Natural killer cell (primary cell): ENCODE measurements at regions of chr18 and their contacts with region 1.

Region 1: GRCh38 chr18:63518178-63519012 is 23.8 kb upstream of the SERPINB12 start:
- DNase-seq: peak; percentile 26 to 83
- ATAC-seq: peak; percentile 65 to 82 (median 78)
- H3K4me3 ChIP-seq: no peak overlapping the region
- H3K4me3 Mint-ChIP-seq: no peak overlapping the region
- H3K27ac ChIP-seq: no peak overlapping the region
- H3K27ac Mint-ChIP-seq: no peak overlapping the region
- H3K4me1 ChIP-seq: no peaks in the 10 kb centered on the region
- H3K4me1 Mint-ChIP-seq: peaks cover 0 to 6% of the 10 kb centered on the region in 2 donors
- H3K27me3 ChIP-seq: peaks cover 3% of the 10 kb centered on the region
- H3K27me3 Mint-ChIP-seq: peaks cover 22 to 29% of the 10 kb centered on the region in 2 donors
- CTCF ChIP-seq: peak; percentile 80

Region 2: DNA sequence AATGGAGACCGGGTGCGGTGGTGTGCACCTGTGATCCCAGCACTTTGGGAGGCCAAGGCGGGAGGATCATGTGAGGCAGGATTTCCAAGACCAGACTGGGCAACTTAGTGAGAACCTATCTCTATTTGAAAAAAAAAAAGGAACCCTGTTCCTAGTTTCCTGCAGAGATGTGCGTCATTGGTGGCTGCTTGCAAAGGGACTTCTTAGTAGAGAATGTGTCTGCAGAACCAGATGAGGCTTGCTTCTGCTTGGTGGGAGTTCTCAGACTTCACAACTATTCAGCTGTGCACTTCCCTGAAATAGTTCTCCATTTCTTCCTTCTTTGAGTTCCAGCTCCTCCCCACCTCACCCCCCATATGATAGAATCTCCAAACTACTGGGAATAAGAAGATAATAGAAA is 973.3 kb before region 1 on chr18:
- intact Hi-C with region 1: no loop called
- DNase-seq: no peak
- ATAC-seq: no peak
- H3K4me3 ChIP-seq: no peak overlapping the region
- H3K4me3 Mint-ChIP-seq: no peak overlapping the region
- H3K27ac ChIP-seq: no peak overlapping the region
- H3K27ac Mint-ChIP-seq: no peak overlapping the region
- H3K4me1 ChIP-seq: no peaks in the 10 kb centered on the region
- H3K4me1 Mint-ChIP-seq: peaks cover 10 to 23% of the 10 kb centered on the region in 2 donors
- H3K27me3 ChIP-seq: no peaks in the 10 kb centered on the region
- H3K27me3 Mint-ChIP-seq: no peaks in the 10 kb centered on the region
- CTCF ChIP-seq: no peak

Region 3: DNA sequence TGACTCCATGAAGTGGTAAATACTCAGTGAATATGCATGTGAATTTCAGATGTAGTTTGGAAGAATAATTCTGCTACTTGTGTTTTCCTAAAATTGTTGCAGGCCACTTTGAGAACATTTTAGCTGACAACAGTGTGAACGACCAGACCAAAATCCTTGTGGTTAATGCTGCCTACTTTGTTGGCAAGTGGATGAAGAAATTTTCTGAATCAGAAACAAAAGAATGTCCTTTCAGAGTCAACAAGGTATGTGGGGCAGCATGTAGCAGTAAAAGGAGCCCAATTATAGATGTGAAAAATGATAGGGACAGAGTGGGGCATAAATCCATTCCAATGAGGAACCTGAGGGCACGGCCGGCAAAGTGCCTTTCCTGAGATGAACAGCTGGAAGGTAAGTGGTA is 25.5 kb before region 1 on chr18:
- intact Hi-C with region 1: no loop called
- DNase-seq: no peak
- ATAC-seq: no peak
- H3K4me3 ChIP-seq: no peak overlapping the region
- H3K4me3 Mint-ChIP-seq: no peak overlapping the region
- H3K27ac ChIP-seq: no peak overlapping the region
- H3K27ac Mint-ChIP-seq: no peak overlapping the region
- H3K4me1 ChIP-seq: no peaks in the 10 kb centered on the region
- H3K4me1 Mint-ChIP-seq: no peaks in the 10 kb centered on the region
- H3K27me3 ChIP-seq: no peaks in the 10 kb centered on the region
- H3K27me3 Mint-ChIP-seq: no peaks in the 10 kb centered on the region
- CTCF ChIP-seq: no peak

Region 4: GRCh38 chr18:63578357-63578958 is 60.1 kb after region 1 on chr18:
- intact Hi-C with region 1: loop called (anchors 1 kb)
- DNase-seq: peak in 1 of 2 donors; percentile 10
- ATAC-seq: peak in 1 of 3 donors; percentile 45
- H3K4me3 ChIP-seq: no peak overlapping the region
- H3K4me3 Mint-ChIP-seq: no peak overlapping the region
- H3K27ac ChIP-seq: no peak overlapping the region
- H3K27ac Mint-ChIP-seq: no peak overlapping the region
- H3K4me1 ChIP-seq: no peaks in the 10 kb centered on the region
- H3K4me1 Mint-ChIP-seq: no peaks in the 10 kb centered on the region
- H3K27me3 ChIP-seq: no peaks in the 10 kb centered on the region
- H3K27me3 Mint-ChIP-seq: peaks cover 0 to 30% of the 10 kb centered on the region in 2 donors
- CTCF ChIP-seq: peak; percentile 41

Region 5: DNA sequence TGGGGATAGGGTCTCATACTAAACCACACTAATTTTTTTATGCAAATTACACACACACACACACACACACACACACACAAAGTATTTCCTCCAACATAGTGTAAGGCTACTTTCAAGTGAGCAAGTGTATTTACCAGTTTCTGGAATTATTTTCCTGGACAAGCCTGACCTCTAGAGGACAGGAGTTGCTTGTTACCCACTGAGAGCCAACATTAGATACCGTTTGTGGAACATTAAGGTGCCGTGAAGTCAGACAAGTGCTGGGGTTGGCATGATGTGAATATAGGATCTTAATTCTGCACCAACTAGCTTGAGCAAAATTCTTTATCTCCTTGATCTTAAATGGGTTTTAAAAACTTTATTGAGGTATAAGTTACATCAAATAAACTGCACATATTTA is 329.8 kb after region 1 on chr18:
- intact Hi-C with region 1: loop called (anchors 1 kb)
- DNase-seq: peak in 1 of 2 donors; percentile 18
- ATAC-seq: no peak
- H3K4me3 ChIP-seq: no peak overlapping the region
- H3K4me3 Mint-ChIP-seq: no peak overlapping the region
- H3K27ac ChIP-seq: no peak overlapping the region
- H3K27ac Mint-ChIP-seq: no peak overlapping the region
- H3K4me1 ChIP-seq: no peaks in the 10 kb centered on the region
- H3K4me1 Mint-ChIP-seq: no peaks in the 10 kb centered on the region
- H3K27me3 ChIP-seq: peaks cover 5% of the 10 kb centered on the region
- H3K27me3 Mint-ChIP-seq: peaks cover 9 to 18% of the 10 kb centered on the region in 2 donors
- CTCF ChIP-seq: no peak

Region 6: GRCh38 chr18:63936156-63936931 is 417.9 kb after region 1 on chr18:
- intact Hi-C with region 1: loop called (anchors 1 kb)
- DNase-seq: peak; percentile 46 to 75
- ATAC-seq: peak; percentile 89 to 94 (median 90)
- H3K4me3 ChIP-seq: peak overlapping the region; percentile 59
- H3K4me3 Mint-ChIP-seq: peak overlapping the region; percentile 77
- H3K27ac ChIP-seq: no peak overlapping the region
- H3K27ac Mint-ChIP-seq: peak overlapping the region in 1 of 2 donors; percentile 44
- H3K4me1 ChIP-seq: peaks cover 13% of the 10 kb centered on the region
- H3K4me1 Mint-ChIP-seq: peaks cover 5 to 7% of the 10 kb centered on the region in 2 donors
- H3K27me3 ChIP-seq: no peaks in the 10 kb centered on the region
- H3K27me3 Mint-ChIP-seq: no peaks in the 10 kb centered on the region
- CTCF ChIP-seq: peak; percentile 41

Region 7: GRCh38 chr18:63979409-63979920 is 461.1 kb after region 1 on chr18:
- intact Hi-C with region 1: loop called (anchors 2 kb)
- DNase-seq: peak in 1 of 2 donors; percentile 74
- ATAC-seq: peak; percentile 59 to 80 (median 77)
- H3K4me3 ChIP-seq: no peak overlapping the region
- H3K4me3 Mint-ChIP-seq: no peak overlapping the region
- H3K27ac ChIP-seq: no peak overlapping the region
- H3K27ac Mint-ChIP-seq: no peak overlapping the region
- H3K4me1 ChIP-seq: peaks cover 3% of the 10 kb centered on the region
- H3K4me1 Mint-ChIP-seq: peaks cover 12 to 13% of the 10 kb centered on the region in 2 donors
- H3K27me3 ChIP-seq: no peaks in the 10 kb centered on the region
- H3K27me3 Mint-ChIP-seq: no peaks in the 10 kb centered on the region
- CTCF ChIP-seq: peak; percentile 78